ENCODE measurements at regions of chr11 and their contacts with region 1.

Region 1: GRCh38 chr11:22244986-22245592 is 52.2 kb downstream of the ANO5 start:
- DNase-seq: no peak
- ATAC-seq: peak; percentile 98
- H3K4me3 ChIP-seq: no peak overlapping the region
- H3K27ac ChIP-seq: no peak overlapping the region
- H3K4me1 ChIP-seq: no peaks in the 10 kb centered on the region
- H3K27me3 ChIP-seq: no peaks in the 10 kb centered on the region
- CTCF ChIP-seq: peak; percentile 62 to 76 (median 75)
- EP300 ChIP-seq: no peak
- POLR2A ChIP-seq: no peak
- RAD21 ChIP-seq: peak; percentile 64

Region 2: GRCh38 chr11:22169833-22170232 is 75.3 kb before region 1 on chr11:
- CTCF ChIA-PET with region 1: interaction called, 111 read pairs
- POLR2A ChIA-PET with region 1: no interaction called
- RAD21 ChIA-PET with region 1: interaction called, 33 read pairs
- SMC1A ChIA-PET with region 1: interaction called, 62 read pairs
- in situ Hi-C with region 1: no loop called
- intact Hi-C with region 1: loop called (anchors 1 kb)
- DNase-seq: no peak
- ATAC-seq: peak; percentile 61; the same call in 2 of the 3 replicates
- H3K4me3 ChIP-seq: no peak overlapping the region
- H3K27ac ChIP-seq: no peak overlapping the region
- H3K4me1 ChIP-seq: no peaks in the 10 kb centered on the region
- H3K27me3 ChIP-seq: no peaks in the 10 kb centered on the region; a peak in 1 of 4 replicates
- CTCF ChIP-seq: peak in 1 of 3 experiments; percentile 16; a peak in 2 of 6 replicates
- EP300 ChIP-seq: no peak
- POLR2A ChIP-seq: no peak
- RAD21 ChIP-seq: peak; percentile 46

Region 3: GRCh38 chr11:22192642-22193347 is 52.3 kb before region 1 on chr11 and contains the start of gene ANO5:
- CTCF ChIA-PET with region 1: interaction called, 14 read pairs
- POLR2A ChIA-PET with region 1: interaction called, 3 read pairs
- RAD21 ChIA-PET with region 1: interaction called, 5 read pairs
- SMC1A ChIA-PET with region 1: interaction called, 3 read pairs
- in situ Hi-C with region 1: no loop called
- intact Hi-C with region 1: no loop called
- DNase-seq: no peak
- ATAC-seq: peak; percentile 75
- H3K4me3 ChIP-seq: peak within 1 kb of the TSS; percentile 60
- H3K27ac ChIP-seq: no peak within 1 kb of the TSS
- H3K4me1 ChIP-seq: no peaks in the 10 kb centered on the region
- H3K27me3 ChIP-seq: no peaks in the 10 kb centered on the region
- CTCF ChIP-seq: no peak
- EP300 ChIP-seq: no peak
- POLR2A ChIP-seq: peak; percentile 48; the same call in 1 of the 2 replicates
- RAD21 ChIP-seq: no peak
- polyA plus RNA-seq, gene ANO5: 1.6 to 3.1 TPM

Region 4: GRCh38 chr11:22221143-22221542 is 23.9 kb before region 1 on chr11:
- CTCF ChIA-PET with region 1: interaction called, 15 read pairs
- POLR2A ChIA-PET with region 1: no interaction called
- RAD21 ChIA-PET with region 1: interaction called, 6 read pairs
- SMC1A ChIA-PET with region 1: interaction called, 7 read pairs
- in situ Hi-C with region 1: no loop called
- intact Hi-C with region 1: no loop called
- DNase-seq: no peak
- ATAC-seq: peak; percentile 63
- H3K4me3 ChIP-seq: no peak overlapping the region
- H3K27ac ChIP-seq: no peak overlapping the region
- H3K4me1 ChIP-seq: no peaks in the 10 kb centered on the region
- H3K27me3 ChIP-seq: no peaks in the 10 kb centered on the region
- CTCF ChIP-seq: no peak
- EP300 ChIP-seq: no peak
- POLR2A ChIP-seq: no peak
- RAD21 ChIP-seq: no peak

Region 5: GRCh38 chr11:22263613-22264012 is 18.5 kb after region 1 on chr11:
- CTCF ChIA-PET with region 1: interaction called, 26 read pairs
- POLR2A ChIA-PET with region 1: no interaction called
- RAD21 ChIA-PET with region 1: interaction called, 3 read pairs
- SMC1A ChIA-PET with region 1: interaction called, 5 read pairs
- in situ Hi-C with region 1: no loop called
- intact Hi-C with region 1: no loop called
- DNase-seq: no peak
- ATAC-seq: no peak
- H3K4me3 ChIP-seq: no peak overlapping the region
- H3K27ac ChIP-seq: no peak overlapping the region
- H3K4me1 ChIP-seq: no peaks in the 10 kb centered on the region
- H3K27me3 ChIP-seq: no peaks in the 10 kb centered on the region
- CTCF ChIP-seq: no peak
- EP300 ChIP-seq: no peak
- POLR2A ChIP-seq: no peak
- RAD21 ChIP-seq: no peak

Measured in GM12878 (cell line).